Mammary epithelial cell (primary cell): ENCODE measurements at regions of chr19 and their contacts with region 1.

Region 1: GRCh38 chr19:44723952-44724319 is 24.6 kb upstream of the BCL3 start:
- DNase-seq: peak; percentile 70
- H3K4me3 ChIP-seq: no peak overlapping the region
- H3K27ac ChIP-seq: no peak overlapping the region
- H3K4me1 ChIP-seq: peaks cover 11% of the 10 kb centered on the region
- H3K27me3 ChIP-seq: no peaks in the 10 kb centered on the region
- CTCF ChIP-seq: peak; percentile 97 to 99

Region 2: DNA sequence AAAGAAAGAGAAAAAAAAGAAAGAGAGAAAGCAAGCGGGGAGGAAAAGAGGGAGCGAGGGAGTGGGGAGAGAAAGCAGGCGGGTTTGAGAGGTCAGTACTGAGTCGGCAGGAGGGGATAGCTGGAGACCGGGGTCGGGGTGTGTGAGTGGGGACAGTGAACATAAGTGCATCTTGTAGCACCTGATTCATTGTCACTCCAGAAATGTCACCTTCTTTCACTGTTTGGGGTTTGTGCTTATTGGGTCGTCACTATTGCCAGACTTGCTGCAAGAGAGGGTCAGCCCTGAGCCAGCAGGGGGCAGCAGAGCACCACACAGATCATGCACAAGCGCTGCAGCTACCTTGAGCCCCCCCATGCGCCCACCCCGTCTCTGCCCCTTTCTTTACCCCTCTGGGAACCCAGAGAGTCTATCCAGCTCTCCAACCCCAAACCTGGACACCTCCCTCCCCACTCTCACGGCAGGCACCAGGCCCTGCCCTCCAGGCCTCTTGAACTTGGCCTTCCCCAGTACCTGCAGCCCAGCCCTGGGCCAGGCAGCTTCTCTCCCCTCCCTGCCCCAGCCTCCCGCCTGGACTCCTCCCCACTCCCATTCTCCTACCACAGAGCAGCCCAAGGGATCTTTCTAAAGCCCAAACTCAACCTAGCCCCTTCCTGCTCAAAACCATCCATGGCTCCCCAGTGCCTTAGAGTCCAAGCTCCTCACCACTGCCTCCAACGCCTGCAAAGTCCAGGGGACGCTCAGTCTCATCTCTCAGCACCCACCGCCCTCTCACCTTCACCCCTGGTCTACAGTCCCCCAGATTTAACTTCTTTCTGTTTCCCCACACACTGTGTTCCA is 34.7 kb before region 1 on chr19:
- CTCF ChIA-PET with region 1: interaction called, 6 read pairs
- dilution Hi-C with region 1: no loop called
- in situ Hi-C with region 1: no loop called
- intact Hi-C with region 1: loop called (anchors 1 kb)
- DNase-seq: no peak
- H3K4me3 ChIP-seq: no peak overlapping the region
- H3K27ac ChIP-seq: no peak overlapping the region
- H3K4me1 ChIP-seq: peaks cover 23% of the 10 kb centered on the region
- H3K27me3 ChIP-seq: no peaks in the 10 kb centered on the region
- CTCF ChIP-seq: peak; percentile 87 to 94

Region 3: DNA sequence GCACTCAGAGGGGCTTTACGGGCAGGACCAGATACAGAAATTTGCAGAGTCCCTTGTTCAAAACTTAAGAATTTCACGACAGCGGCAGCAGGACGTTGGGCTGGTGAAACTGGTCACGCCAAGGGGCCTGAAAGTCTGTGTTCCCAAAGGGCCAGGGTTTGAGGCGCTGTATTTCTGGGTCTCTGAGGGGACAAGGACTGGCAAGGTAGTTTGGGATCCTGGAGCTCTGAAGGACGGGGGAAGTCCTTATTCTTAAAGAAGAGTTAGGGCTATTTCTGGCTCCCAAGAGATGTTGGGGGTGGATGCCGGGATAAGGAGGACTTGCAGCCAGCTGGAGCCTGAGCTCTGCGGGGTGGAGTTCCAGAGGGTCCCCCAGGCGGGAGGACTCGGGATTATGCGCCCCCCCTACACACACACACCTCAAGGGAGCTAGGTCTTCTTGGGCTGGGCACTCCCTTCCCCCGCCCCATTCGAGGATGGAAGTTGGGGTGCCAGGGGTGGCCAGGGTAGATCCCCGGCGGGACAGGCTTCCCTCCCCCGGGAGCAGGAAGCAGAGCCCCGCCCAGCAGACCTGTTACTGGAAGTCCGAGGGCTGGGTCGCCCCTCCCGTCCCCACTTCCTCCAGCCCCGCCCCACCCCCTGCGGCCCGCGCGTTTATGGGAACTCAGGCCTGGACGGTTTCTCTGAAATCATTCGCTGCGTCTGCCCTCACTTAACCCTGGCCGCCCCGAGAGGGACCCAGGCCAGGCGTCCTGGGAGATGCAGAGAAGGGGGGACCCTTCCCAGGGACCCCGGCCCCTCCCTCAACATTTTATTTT is 30.2 kb after region 1 on chr19:
- CTCF ChIA-PET with region 1: interaction called, 3 read pairs
- dilution Hi-C with region 1: no loop called
- in situ Hi-C with region 1: no loop called
- intact Hi-C with region 1: loop called (anchors 1 kb)
- DNase-seq: peak; percentile 72
- H3K4me3 ChIP-seq: peak overlapping the region; percentile 11 to 42 (median 40)
- H3K27ac ChIP-seq: peak overlapping the region; percentile 74
- H3K4me1 ChIP-seq: peaks cover 36% of the 10 kb centered on the region
- H3K27me3 ChIP-seq: no peaks in the 10 kb centered on the region
- CTCF ChIP-seq: no peak